Naive thymus-derived CD4-positive, alpha-beta T cell (primary cell): ENCODE measurements at regions of chr16 and their contacts with region 1.

Region 1: DNA sequence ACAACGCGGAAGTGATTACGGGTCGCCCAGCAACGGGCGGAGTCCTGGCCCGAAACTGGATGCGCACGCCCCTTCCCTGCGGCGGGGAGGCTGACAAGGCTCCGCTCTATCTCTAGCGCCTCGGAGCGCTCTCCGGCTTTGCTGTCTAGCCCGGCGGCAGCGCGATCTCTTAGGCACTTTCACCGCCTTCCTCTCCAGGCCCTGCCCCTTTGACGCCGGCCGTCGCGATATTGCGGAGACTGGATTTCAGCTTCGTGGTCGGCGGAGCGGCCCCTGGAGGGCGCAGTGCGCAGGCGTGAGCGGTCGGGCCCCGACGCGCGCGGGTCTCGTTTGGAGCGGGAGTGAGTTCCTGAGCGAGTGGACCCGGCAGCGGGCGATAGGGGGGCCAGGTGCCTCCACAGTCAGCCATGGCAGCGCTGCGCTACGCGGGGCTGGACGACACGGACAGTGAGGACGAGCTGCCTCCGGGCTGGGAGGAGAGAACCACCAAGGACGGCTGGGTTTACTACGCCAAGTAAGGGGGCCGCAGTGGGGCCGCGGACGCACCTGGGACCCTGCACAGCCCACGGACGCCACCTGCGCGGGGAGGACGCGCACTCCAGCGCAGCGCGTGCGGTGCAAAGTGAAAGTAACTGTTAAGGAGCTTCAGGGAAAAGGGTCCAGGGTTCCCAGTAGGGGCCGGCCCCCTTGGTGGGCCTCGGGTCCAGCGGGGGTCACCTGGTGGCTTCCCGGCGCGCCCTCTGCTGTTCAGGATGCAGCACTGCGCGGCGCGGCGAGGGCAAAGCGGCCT is at the start of gene WWOX:
- DNase-seq: peak; percentile 92 to 98 (median 96)
- ATAC-seq: peak; percentile 97
- H3K4me3 ChIP-seq: peak within 1 kb of the TSS; percentile 99
- H3K4me3 Mint-ChIP-seq: peak within 1 kb of the TSS; percentile 80 to 94 (median 90)
- H3K27ac ChIP-seq: peak within 1 kb of the TSS; percentile 81
- H3K27ac Mint-ChIP-seq: peak within 1 kb of the TSS; percentile 81 to 96 (median 94)
- H3K4me1 ChIP-seq: peaks cover 8 to 11% of the 10 kb centered on the region in 2 donors
- H3K4me1 Mint-ChIP-seq: peaks cover 14 to 46% (median 28%) of the 10 kb centered on the region in 7 donors
- H3K27me3 ChIP-seq: no peaks in the 10 kb centered on the region
- H3K27me3 Mint-ChIP-seq: peaks cover 0 to 8% (median 2%) of the 10 kb centered on the region in 5 donors
- total RNA-seq, gene WWOX: 19.2 to 31.1 (median 26.1) TPM

Region 2: GRCh38 chr16:77190478-77191258 is 908.9 kb before region 1 on chr16 and contains the start of gene MON1B:
- CTCF ChIA-PET with region 1: no interaction called
- POLR2A ChIA-PET with region 1: interaction called, 3 read pairs
- intact Hi-C with region 1: loop called in 1 of 2 experiments (anchors 1 kb)
- DNase-seq: peak; percentile 86 to 98 (median 97)
- ATAC-seq: peak; percentile 96
- H3K4me3 ChIP-seq: peak within 1 kb of the TSS; percentile 97
- H3K4me3 Mint-ChIP-seq: peak within 1 kb of the TSS; percentile 90 to 99 (median 96)
- H3K27ac ChIP-seq: peak within 1 kb of the TSS; percentile 86
- H3K27ac Mint-ChIP-seq: peak within 1 kb of the TSS; percentile 98 to 100 (median 100)
- H3K4me1 ChIP-seq: peaks cover 13 to 23% of the 10 kb centered on the region in 2 donors
- H3K4me1 Mint-ChIP-seq: peaks cover 36 to 55% (median 46%) of the 10 kb centered on the region in 7 donors
- H3K27me3 ChIP-seq: no peaks in the 10 kb centered on the region
- H3K27me3 Mint-ChIP-seq: peaks cover 0 to 10% (median 4%) of the 10 kb centered on the region in 5 donors
- total RNA-seq, gene MON1B: 60.8 to 87.2 (median 67.3) TPM

Region 3: GRCh38 chr16:77236063-77236511 is 863.5 kb before region 1 on chr16:
- CTCF ChIA-PET with region 1: no interaction called
- POLR2A ChIA-PET with region 1: no interaction called
- intact Hi-C with region 1: loop called in 1 of 2 experiments (anchors 2 kb)
- DNase-seq: peak; percentile 74 to 89 (median 83)
- ATAC-seq: peak; percentile 100
- H3K4me3 ChIP-seq: peak overlapping the region; percentile 42
- H3K4me3 Mint-ChIP-seq: peak overlapping the region; percentile 57 to 87 (median 76)
- H3K27ac ChIP-seq: no peak overlapping the region
- H3K27ac Mint-ChIP-seq: peak overlapping the region in 2 of 9 donors; percentile 13 to 48
- H3K4me1 ChIP-seq: no peaks in the 10 kb centered on the region
- H3K4me1 Mint-ChIP-seq: peaks cover 0 to 6% (median 5%) of the 10 kb centered on the region in 7 donors
- H3K27me3 ChIP-seq: no peaks in the 10 kb centered on the region
- H3K27me3 Mint-ChIP-seq: peaks cover 12 to 30% (median 18%) of the 10 kb centered on the region in 5 donors

Region 4: GRCh38 chr16:77722309-77723107 is 377.1 kb before region 1 on chr16 and contains the start of gene NUDT7:
- CTCF ChIA-PET with region 1: no interaction called
- POLR2A ChIA-PET with region 1: no interaction called
- intact Hi-C with region 1: loop called (anchors 1 kb)
- DNase-seq: peak; percentile 78 to 98 (median 88)
- ATAC-seq: peak; percentile 98
- H3K4me3 ChIP-seq: peak within 1 kb of the TSS; percentile 76
- H3K4me3 Mint-ChIP-seq: peak within 1 kb of the TSS; percentile 86 to 94 (median 90)
- H3K27ac ChIP-seq: peak within 1 kb of the TSS; percentile 71
- H3K27ac Mint-ChIP-seq: peak within 1 kb of the TSS; percentile 51 to 91 (median 85)
- H3K4me1 ChIP-seq: peaks cover 5 to 9% of the 10 kb centered on the region in 2 donors
- H3K4me1 Mint-ChIP-seq: peaks cover 7 to 21% (median 15%) of the 10 kb centered on the region in 7 donors
- H3K27me3 ChIP-seq: no peaks in the 10 kb centered on the region
- H3K27me3 Mint-ChIP-seq: no peaks in the 10 kb centered on the region
- total RNA-seq, gene NUDT7: 2.1 to 10.9 (median 8.2) TPM

Region 5: GRCh38 chr16:78122774-78123315 is 23.3 kb after region 1 on chr16:
- CTCF ChIA-PET with region 1: no interaction called
- POLR2A ChIA-PET with region 1: no interaction called
- intact Hi-C with region 1: loop called in 1 of 2 experiments (anchors 1 kb)
- DNase-seq: peak in 6 of 9 donors; percentile 37 to 64 (median 52)
- ATAC-seq: peak; percentile 85
- H3K4me3 ChIP-seq: no peak overlapping the region
- H3K4me3 Mint-ChIP-seq: peak overlapping the region in 1 of 10 donors; percentile 7
- H3K27ac ChIP-seq: no peak overlapping the region
- H3K27ac Mint-ChIP-seq: peak overlapping the region in 1 of 9 donors; percentile 54
- H3K4me1 ChIP-seq: no peaks in the 10 kb centered on the region
- H3K4me1 Mint-ChIP-seq: peaks cover 2 to 6% (median 4%) of the 10 kb centered on the region in 7 donors
- H3K27me3 ChIP-seq: no peaks in the 10 kb centered on the region
- H3K27me3 Mint-ChIP-seq: no peaks in the 10 kb centered on the region

Region 6: DNA sequence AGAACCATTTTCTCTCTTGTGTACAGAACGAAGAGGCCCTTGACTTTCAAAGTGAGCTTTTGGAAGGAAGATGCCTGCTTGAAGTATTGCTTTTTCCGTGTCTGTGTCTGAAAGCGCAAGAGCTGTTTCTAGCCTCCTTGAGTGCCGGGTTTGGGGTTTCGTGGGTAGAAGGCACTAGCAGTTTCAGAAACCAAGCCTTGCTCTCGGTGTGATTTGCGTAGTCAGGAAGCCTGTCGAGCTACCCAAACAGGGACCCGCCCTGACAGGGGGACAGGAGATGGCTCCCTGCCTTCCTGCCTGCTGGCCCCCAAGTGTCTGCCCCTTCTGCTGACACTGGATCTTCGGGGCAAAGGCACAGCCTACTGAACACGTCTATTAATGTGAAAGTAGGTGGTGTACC is 1178.9 kb after region 1 on chr16:
- CTCF ChIA-PET with region 1: no interaction called
- POLR2A ChIA-PET with region 1: no interaction called
- intact Hi-C with region 1: loop called (anchors 5 to 10 kb)
- DNase-seq: peak in 8 of 9 donors; percentile 14 to 64 (median 44)
- ATAC-seq: peak; percentile 85
- H3K4me3 ChIP-seq: peak overlapping the region; percentile 22
- H3K4me3 Mint-ChIP-seq: peak overlapping the region; percentile 5 to 74 (median 55)
- H3K27ac ChIP-seq: no peak overlapping the region
- H3K27ac Mint-ChIP-seq: peak overlapping the region in 8 of 9 donors; percentile 10 to 91 (median 63)
- H3K4me1 ChIP-seq: peaks cover 16 to 53% of the 10 kb centered on the region in 2 donors
- H3K4me1 Mint-ChIP-seq: peaks cover 16 to 83% (median 34%) of the 10 kb centered on the region in 7 donors
- H3K27me3 ChIP-seq: no peaks in the 10 kb centered on the region
- H3K27me3 Mint-ChIP-seq: peaks cover 0 to 26% (median 4%) of the 10 kb centered on the region in 5 donors